ENCODE measurements at regions of chr17 and their contacts with region 1.

Region 1: DNA sequence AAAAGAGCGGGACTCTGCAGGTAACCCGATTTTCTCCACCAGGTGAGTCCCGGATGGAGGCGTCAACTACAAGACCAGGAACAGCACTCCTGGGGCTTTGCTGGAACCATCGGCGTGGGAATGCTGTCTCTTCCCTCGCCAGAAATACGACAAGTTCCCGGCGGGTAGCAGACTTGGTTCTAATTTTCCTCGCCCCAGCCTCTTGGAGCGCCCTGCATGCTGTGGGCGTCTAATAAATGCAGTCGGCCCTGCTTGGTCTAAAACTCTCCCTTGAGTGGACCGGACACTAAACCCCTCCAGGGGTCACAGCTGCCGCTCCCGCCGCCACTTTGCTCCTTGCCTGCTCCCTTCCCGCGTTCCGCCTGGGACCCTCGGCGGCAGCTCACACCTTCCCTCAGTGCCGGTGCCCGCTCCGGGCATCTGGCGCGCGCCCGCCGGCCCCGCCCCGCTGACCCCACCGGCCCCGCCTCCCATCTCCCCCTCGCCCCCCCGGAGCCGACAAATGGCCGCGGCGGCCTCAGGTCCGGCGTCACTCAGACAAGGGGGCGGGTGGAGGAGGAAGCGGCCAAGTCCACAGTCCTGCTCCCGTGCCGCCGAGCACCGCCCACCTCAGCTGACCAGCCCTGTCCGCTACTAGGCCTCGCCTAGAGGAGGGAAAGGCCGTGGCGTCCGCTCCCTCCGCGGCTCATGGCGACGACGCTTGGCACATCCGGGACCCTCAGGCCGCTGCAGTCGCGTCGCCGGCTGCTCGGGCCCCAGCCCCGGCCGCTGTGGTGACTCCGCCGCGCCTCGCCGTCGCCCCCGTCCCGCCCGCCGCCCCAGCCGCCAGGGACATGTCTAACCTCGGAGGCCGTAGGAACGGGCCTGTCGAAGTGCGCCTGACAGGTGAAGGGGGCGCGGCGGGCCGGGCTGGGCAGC is 65.8 kb downstream of the KPNA2 start:
- DNase-seq: peak; percentile 67
- H3K4me3 ChIP-seq: peak overlapping the region; percentile 71
- H3K27ac ChIP-seq: no peak overlapping the region
- H3K27me3 ChIP-seq: no peaks in the 10 kb centered on the region
- CTCF ChIP-seq: no peak

Region 2: DNA sequence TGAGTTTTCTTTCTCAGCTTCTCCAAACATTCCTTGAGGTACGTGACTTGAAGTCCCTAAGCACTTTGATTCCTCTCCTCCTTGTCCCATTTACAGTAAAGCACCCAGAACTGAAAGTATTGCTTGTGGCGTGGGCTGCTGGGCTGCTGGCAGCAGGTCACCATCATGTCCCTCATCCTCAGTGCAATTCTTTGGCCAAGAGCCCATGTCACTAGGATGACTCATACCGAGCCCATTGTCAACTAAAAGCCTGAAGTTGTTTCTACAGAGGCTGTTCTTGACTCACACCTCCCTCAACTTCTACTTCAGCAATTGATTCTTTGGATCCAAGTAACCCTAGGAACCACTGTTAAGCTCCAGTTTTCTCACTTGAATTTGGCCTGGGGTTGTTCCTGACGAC is 11.4 kb before region 1 on chr17:
- CTCF ChIA-PET with region 1: no interaction called
- POLR2A ChIA-PET with region 1: no interaction called
- DNase-seq: no peak
- H3K4me3 ChIP-seq: no peak overlapping the region
- H3K27ac ChIP-seq: no peak overlapping the region
- H3K27me3 ChIP-seq: no peaks in the 10 kb centered on the region
- CTCF ChIP-seq: no peak

Region 3: GRCh38 chr17:68133346-68134045 is 32.2 kb after region 1 on chr17:
- CTCF ChIA-PET with region 1: interaction called, 6 read pairs
- POLR2A ChIA-PET with region 1: interaction called, 12 read pairs
- DNase-seq: no peak
- H3K4me3 ChIP-seq: no peak overlapping the region
- H3K27ac ChIP-seq: no peak overlapping the region
- H3K27me3 ChIP-seq: no peaks in the 10 kb centered on the region
- CTCF ChIP-seq: no peak

Measured in AG04450 (cell line).